ENCODE measurements at regions of chr5 and their contacts with region 1.

Region 1: DNA sequence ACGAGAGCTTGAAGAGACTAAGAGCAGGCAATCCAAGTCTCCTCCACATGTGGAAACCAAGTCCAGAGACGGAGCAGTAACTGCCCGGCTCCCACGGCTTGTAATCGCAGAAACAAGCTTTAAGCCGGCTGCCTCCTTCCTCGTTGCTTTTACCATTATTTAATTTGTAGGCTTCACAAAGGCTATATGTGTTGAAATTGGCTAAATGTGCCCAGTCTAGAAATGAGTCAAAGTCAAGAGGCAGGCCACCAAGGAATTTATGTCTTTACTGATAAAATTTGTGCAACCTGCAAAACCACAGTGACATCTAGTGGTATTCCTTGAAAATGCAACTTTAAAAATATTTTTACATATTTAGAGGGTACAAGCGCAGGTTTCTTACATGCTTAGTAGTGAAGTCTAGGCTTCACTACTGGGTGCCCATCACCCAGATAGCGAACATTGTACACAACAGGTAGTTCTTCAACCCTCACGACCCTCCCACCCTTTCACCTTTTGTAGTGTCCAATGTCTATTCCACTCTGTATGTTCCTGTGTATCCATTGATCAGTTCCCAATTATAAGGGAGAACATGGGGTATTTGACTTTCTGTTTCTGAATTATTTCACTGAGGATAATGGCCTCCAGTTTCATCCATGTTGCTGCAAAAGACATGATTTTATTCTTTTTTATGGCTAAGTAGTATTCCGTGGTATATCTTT is 33.5 kb upstream of the EBF1 start:
- DNase-seq: peak; percentile 28
- ATAC-seq: peak; percentile 89
- H3K4me3 ChIP-seq: no peak overlapping the region
- H3K27ac ChIP-seq: no peak overlapping the region
- H3K4me1 ChIP-seq: no peaks in the 10 kb centered on the region
- H3K27me3 ChIP-seq: 0 out of 4 replicates have a peak, but pooled peaks cover 0 to 4% of the 10 kb centered on the region in 2 experiments
- CTCF ChIP-seq: peak; percentile 64 to 83 (median 73)
- EP300 ChIP-seq: no peak; a peak in 1 of 4 replicates
- POLR2A ChIP-seq: no peak
- RAD21 ChIP-seq: peak; percentile 88

Region 2: GRCh38 chr5:157761690-157762621 is 1371.2 kb before region 1 on chr5:
- CTCF ChIA-PET with region 1: interaction called, 7 read pairs
- POLR2A ChIA-PET with region 1: no interaction called
- RAD21 ChIA-PET with region 1: interaction called, 4 read pairs
- SMC1A ChIA-PET with region 1: interaction called, 15 read pairs
- in situ Hi-C with region 1: loop called (anchors 10 kb)
- intact Hi-C with region 1: loop called (anchors 1 kb)
- DNase-seq: no peak
- ATAC-seq: peak; percentile 99
- H3K4me3 ChIP-seq: no peak overlapping the region
- H3K27ac ChIP-seq: no peak overlapping the region
- H3K4me1 ChIP-seq: 0 out of 2 replicates have a peak, but pooled peaks cover 3% of the 10 kb centered on the region
- H3K27me3 ChIP-seq: no peaks in the 10 kb centered on the region
- CTCF ChIP-seq: peak; percentile 71 to 81 (median 79)
- EP300 ChIP-seq: no peak
- POLR2A ChIP-seq: no peak
- RAD21 ChIP-seq: peak; percentile 73

Region 3: GRCh38 chr5:157994906-157995519 is 1138.2 kb before region 1 on chr5:
- CTCF ChIA-PET with region 1: interaction called, 11 read pairs
- POLR2A ChIA-PET with region 1: no interaction called
- RAD21 ChIA-PET with region 1: interaction called, 4 read pairs
- SMC1A ChIA-PET with region 1: interaction called, 3 read pairs
- in situ Hi-C with region 1: no loop called
- intact Hi-C with region 1: no loop called
- DNase-seq: peak; percentile 3
- ATAC-seq: peak; percentile 98
- H3K4me3 ChIP-seq: no peak overlapping the region
- H3K27ac ChIP-seq: no peak overlapping the region
- H3K4me1 ChIP-seq: no peaks in the 10 kb centered on the region
- H3K27me3 ChIP-seq: no peaks in the 10 kb centered on the region
- CTCF ChIP-seq: peak; percentile 75 to 83 (median 82)
- EP300 ChIP-seq: no peak
- POLR2A ChIP-seq: no peak
- RAD21 ChIP-seq: peak; percentile 76

Region 4: DNA sequence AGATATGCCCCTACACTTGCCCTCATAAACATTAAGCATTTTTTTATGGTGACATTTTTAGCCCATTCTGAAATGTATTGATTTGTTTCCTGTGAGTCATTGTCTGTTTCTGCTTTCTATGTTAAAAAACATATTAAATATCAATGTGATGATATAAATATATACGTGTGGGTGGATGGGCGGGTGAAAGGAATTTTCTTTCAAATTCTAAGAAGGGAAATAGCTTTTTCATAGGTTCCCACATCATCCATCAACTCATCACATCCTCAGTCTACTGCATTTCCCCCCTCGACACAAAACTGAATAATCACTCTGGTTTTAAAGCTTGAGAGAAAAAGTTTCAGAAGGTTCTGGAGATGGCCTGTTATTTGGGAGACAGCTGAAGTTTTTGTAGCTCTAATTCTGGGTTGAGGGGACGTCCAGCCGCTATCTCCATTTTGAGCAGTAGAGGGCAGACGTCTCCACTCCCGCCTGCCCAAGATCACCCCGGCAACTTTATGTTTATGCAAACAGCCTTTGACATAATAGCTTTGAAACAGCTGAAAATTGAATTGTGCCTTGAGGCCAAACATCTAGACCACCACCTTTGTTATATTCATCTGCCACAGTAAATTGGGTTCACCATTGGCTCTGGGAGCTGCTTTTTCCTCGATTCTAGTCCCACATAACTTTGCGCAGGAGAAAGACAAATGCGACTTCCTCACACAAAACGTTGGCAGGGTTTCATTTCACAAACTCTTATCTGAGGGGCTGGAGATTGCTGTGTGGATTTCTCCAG is 1058.0 kb before region 1 on chr5:
- CTCF ChIA-PET with region 1: interaction called, 28 read pairs
- POLR2A ChIA-PET with region 1: no interaction called
- RAD21 ChIA-PET with region 1: interaction called, 25 read pairs
- SMC1A ChIA-PET with region 1: interaction called, 31 read pairs
- in situ Hi-C with region 1: loop called (anchors 10 kb)
- intact Hi-C with region 1: loop called (anchors 1 kb)
- DNase-seq: no peak
- ATAC-seq: peak; percentile 94
- H3K4me3 ChIP-seq: no peak overlapping the region
- H3K27ac ChIP-seq: no peak overlapping the region
- H3K4me1 ChIP-seq: no peaks in the 10 kb centered on the region
- H3K27me3 ChIP-seq: no peaks in the 10 kb centered on the region; a peak in 1 of 4 replicates
- CTCF ChIP-seq: peak; percentile 78 to 81 (median 80)
- EP300 ChIP-seq: no peak
- POLR2A ChIP-seq: no peak
- RAD21 ChIP-seq: peak; percentile 71

Region 5: DNA sequence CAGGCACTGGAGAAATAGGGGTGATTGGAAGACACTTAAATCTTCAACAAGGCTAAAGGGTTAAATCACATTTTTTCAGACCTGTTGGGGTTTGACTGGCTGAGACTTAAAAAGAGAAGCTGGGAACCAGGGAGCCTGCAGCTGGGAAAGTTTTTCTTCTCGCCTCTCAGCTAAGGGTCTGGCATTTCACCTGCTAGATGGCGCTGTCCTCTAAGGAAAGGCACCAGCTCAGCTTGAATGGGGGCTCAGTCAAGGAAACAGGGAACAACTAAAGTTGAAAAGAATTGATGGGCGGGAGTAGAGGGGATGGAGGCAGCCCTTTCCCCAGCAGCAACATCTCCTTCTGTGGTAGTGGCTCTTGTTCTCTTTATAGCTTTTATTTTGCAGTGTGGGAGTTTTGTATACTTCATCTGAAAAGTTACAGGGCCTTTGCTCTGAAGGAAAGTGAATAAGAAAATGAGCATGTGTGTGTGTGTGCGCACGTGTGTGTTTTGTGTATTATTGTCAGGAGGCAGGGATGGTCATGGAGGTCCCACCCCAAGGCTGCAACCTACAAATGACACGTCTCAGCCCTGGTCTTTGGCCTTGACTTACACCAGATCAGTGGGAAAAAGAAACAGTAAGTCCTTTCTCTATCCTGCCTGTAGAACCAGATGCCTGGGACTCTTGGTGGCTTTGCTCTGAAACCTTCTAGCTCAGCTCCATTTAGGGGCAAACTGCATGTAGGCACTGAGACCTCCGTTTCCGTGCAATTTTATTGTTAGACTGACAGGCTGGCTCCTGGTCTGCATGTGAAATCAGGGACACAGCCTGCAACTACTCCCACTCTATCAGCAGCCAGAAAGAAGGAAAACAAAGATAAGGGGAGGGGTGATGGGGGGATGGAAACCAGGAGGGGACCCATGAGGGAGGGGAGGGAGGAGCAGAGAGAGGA is 958.0 kb before region 1 on chr5:
- CTCF ChIA-PET with region 1: interaction called, 52 read pairs
- POLR2A ChIA-PET with region 1: no interaction called
- RAD21 ChIA-PET with region 1: interaction called, 30 read pairs
- SMC1A ChIA-PET with region 1: interaction called, 48 read pairs
- in situ Hi-C with region 1: no loop called
- intact Hi-C with region 1: loop called (anchors 2 kb)
- DNase-seq: peak; percentile 27
- ATAC-seq: peak; percentile 97
- H3K4me3 ChIP-seq: no peak overlapping the region
- H3K27ac ChIP-seq: no peak overlapping the region
- H3K4me1 ChIP-seq: no peaks in the 10 kb centered on the region
- H3K27me3 ChIP-seq: peaks cover 0 to 1% of the 10 kb centered on the region in 2 experiments; a peak in 1 of 4 replicates
- CTCF ChIP-seq: peak; percentile 81 to 87 (median 84)
- EP300 ChIP-seq: no peak
- POLR2A ChIP-seq: no peak
- RAD21 ChIP-seq: peak; percentile 99

Region 6: GRCh38 chr5:159083548-159084452 is 49.4 kb before region 1 on chr5:
- CTCF ChIA-PET with region 1: no interaction called
- POLR2A ChIA-PET with region 1: no interaction called
- RAD21 ChIA-PET with region 1: no interaction called
- SMC1A ChIA-PET with region 1: no interaction called
- in situ Hi-C with region 1: no loop called
- intact Hi-C with region 1: no loop called
- DNase-seq: no peak
- ATAC-seq: peak; percentile 85
- H3K4me3 ChIP-seq: no peak overlapping the region
- H3K27ac ChIP-seq: no peak overlapping the region
- H3K4me1 ChIP-seq: peaks cover 7% of the 10 kb centered on the region; the same call in 1 of the 2 replicates
- H3K27me3 ChIP-seq: no peaks in the 10 kb centered on the region
- CTCF ChIP-seq: no peak
- EP300 ChIP-seq: peak; percentile 90 to 92; a peak in 3 of 4 replicates
- POLR2A ChIP-seq: no peak
- RAD21 ChIP-seq: no peak

Region 7: GRCh38 chr5:159120446-159120845 is 12.7 kb before region 1 on chr5:
- CTCF ChIA-PET with region 1: interaction called, 11 read pairs
- POLR2A ChIA-PET with region 1: no interaction called
- RAD21 ChIA-PET with region 1: no interaction called
- SMC1A ChIA-PET with region 1: interaction called, 6 read pairs
- in situ Hi-C with region 1: no loop called
- intact Hi-C with region 1: no loop called
- DNase-seq: no peak
- ATAC-seq: peak; percentile 81
- H3K4me3 ChIP-seq: no peak overlapping the region
- H3K27ac ChIP-seq: no peak overlapping the region
- H3K4me1 ChIP-seq: no peaks in the 10 kb centered on the region
- H3K27me3 ChIP-seq: no peaks in the 10 kb centered on the region
- CTCF ChIP-seq: no peak
- EP300 ChIP-seq: no peak
- POLR2A ChIP-seq: no peak
- RAD21 ChIP-seq: no peak

Measured in GM12878 (cell line).